Activated CD4-positive, alpha-beta memory T cell treated with anti-CD3 and anti-CD28 coated beads, Interleukin-2, amount 10 ng/mL, durations not matched to agents 7 days and 5 days (primary cell): ENCODE measurements at regions of chr1 and their contacts with region 1.

Region 1: DNA sequence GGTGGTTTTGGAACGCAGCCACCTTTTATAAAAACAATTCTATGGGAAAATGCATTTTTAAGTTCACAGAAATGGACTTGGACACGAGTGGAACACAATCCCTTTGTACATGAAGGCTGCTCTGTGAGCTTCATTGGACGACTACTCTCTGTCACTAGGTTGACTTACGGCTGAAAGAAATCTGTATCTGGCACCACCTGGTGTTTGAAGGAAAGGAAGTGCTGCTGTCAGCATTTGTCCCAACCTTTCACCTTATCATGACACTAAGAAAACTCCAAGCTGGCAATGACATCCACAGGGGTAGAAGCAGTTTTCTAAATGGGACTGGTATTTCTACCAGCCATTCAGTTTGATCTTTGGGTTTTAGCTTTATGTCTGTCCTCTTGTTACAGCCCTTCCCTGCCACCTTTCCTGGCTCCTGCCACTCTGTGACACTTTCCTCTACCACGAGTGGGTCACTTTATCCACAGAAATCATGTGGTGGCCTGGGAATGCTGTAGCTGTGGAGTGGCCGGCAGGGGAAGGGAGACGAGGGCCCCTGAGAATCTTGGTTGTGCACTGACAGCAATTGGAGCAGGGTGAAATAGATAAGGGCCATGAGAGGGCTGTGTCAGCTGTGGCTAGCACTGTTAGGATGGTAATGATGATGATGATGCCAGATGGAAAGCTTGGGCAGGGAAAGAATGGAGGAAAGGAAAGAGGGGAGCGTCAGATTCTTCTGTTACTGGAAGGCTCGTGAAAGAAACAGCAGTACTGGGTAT is 85.2 kb downstream of the TBX19 start:
- DNase-seq: no peak
- H3K4me3 Mint-ChIP-seq: no peak overlapping the region
- H3K27ac Mint-ChIP-seq: no peak overlapping the region
- H3K4me1 Mint-ChIP-seq: peaks cover 48% of the 10 kb centered on the region
- H3K27me3 Mint-ChIP-seq: peaks cover 5% of the 10 kb centered on the region

Region 2: GRCh38 chr1:168348146-168348709 is 17.7 kb before region 1 on chr1:
- CTCF ChIA-PET with region 1: interaction called, 263 read pairs
- POLR2A ChIA-PET with region 1: interaction called, 64 read pairs
- DNase-seq: no peak
- H3K4me3 Mint-ChIP-seq: peak overlapping the region; percentile 81
- H3K27ac Mint-ChIP-seq: peak overlapping the region; percentile 84
- H3K4me1 Mint-ChIP-seq: peaks cover 41% of the 10 kb centered on the region
- H3K27me3 Mint-ChIP-seq: peaks cover 1% of the 10 kb centered on the region